Adrenal gland (tissue), 19 donors: ENCODE measurements at regions of chr17 and their contacts with region 1.

Region 1: GRCh38 chr17:59837308-59838051 is 55.3 kb downstream of the TUBD1 start:
- DNase-seq: peak; percentile 71 to 94 (median 86)
- H3K4me3 ChIP-seq: peak overlapping the region in 2 of 4 donors; percentile 38 to 81
- H3K27ac ChIP-seq: peak overlapping the region; percentile 83 to 99 (median 96)
- H3K4me1 ChIP-seq: peaks cover 9 to 21% of the 10 kb centered on the region in 2 donors
- H3K27me3 ChIP-seq: no peaks in the 10 kb centered on the region
- CTCF ChIP-seq: no peak
- POLR2A ChIP-seq: peak; percentile 88 to 92

Region 2: GRCh38 chr17:59688008-59688407 is 149.5 kb before region 1 on chr17:
- intact Hi-C with region 1: no loop called
- DNase-seq: no peak
- H3K4me3 ChIP-seq: no peak overlapping the region
- H3K27ac ChIP-seq: no peak overlapping the region
- H3K4me1 ChIP-seq: no peaks in the 10 kb centered on the region
- H3K27me3 ChIP-seq: no peaks in the 10 kb centered on the region
- CTCF ChIP-seq: no peak
- POLR2A ChIP-seq: no peak

Region 3: GRCh38 chr17:59762513-59763374 is 74.7 kb before region 1 on chr17:
- intact Hi-C with region 1: loop called in 1 of 2 experiments (anchors 10 kb)
- DNase-seq: no peak
- H3K4me3 ChIP-seq: no peak overlapping the region
- H3K27ac ChIP-seq: peak overlapping the region in 1 of 5 donors; percentile 41
- H3K4me1 ChIP-seq: peaks cover 8 to 22% of the 10 kb centered on the region in 2 donors
- H3K27me3 ChIP-seq: no peaks in the 10 kb centered on the region
- CTCF ChIP-seq: no peak
- POLR2A ChIP-seq: no peak

Region 4: DNA sequence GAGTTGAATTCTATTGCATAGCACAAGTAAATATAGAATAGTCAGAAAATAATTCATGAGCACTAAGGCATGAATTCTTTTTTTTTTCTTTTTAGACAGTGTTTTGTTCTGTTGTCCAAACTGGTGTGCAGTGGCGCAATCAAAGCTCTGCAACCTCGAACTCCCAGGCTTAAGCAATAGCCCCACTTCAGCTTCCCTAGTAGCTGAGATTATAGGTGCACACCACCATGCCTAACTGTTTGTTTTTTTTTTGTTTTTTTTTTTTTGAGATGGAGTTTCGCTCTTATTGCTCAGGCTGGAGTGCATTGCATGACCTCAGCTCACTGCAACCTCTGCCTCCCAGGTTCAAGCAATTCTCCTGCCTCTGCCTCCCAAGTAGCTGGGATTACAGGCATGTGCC is 38.6 kb after region 1 on chr17:
- intact Hi-C with region 1: no loop called
- DNase-seq: peak in 1 of 7 donors; percentile 46
- H3K4me3 ChIP-seq: no peak overlapping the region
- H3K27ac ChIP-seq: no peak overlapping the region
- H3K4me1 ChIP-seq: no peaks in the 10 kb centered on the region
- H3K27me3 ChIP-seq: no peaks in the 10 kb centered on the region
- CTCF ChIP-seq: no peak
- POLR2A ChIP-seq: no peak

Region 5: DNA sequence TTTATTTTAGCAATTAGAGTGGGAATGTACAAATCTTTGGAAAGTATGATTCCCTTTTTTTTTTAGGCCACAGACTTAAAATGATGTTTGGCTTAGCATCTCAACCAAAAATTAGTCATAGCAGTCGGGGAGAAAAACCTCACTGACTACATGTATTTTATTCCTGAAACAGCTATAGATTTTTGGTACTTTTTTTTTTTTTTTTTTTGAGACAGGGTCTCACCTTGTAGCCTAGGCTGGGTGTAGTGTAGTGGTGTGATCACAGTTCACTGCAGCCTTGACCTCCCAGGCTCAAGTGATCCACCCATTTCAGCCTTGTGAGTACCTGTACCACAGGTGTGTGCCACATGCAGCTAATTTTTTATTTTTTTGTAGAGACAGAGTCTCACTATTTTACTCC is 103.7 kb after region 1 on chr17:
- intact Hi-C with region 1: no loop called
- DNase-seq: no peak
- H3K4me3 ChIP-seq: no peak overlapping the region
- H3K27ac ChIP-seq: no peak overlapping the region
- H3K4me1 ChIP-seq: no peaks in the 10 kb centered on the region
- H3K27me3 ChIP-seq: no peaks in the 10 kb centered on the region
- CTCF ChIP-seq: no peak
- POLR2A ChIP-seq: no peak